CD4-positive, alpha-beta T cell (primary cell): ENCODE measurements at regions of chrX and their contacts with region 1.

Region 1: GRCh38 chrX:119880552-119881437 is 9.2 kb downstream of the NDUFA1 start:
- DNase-seq: peak in 8 of 14 experiments; percentile 4 to 76 (median 25)
- ATAC-seq: peak; percentile 90
- H3K4me3 ChIP-seq: no peak overlapping the region
- H3K4me3 Mint-ChIP-seq: no peak overlapping the region
- H3K27ac ChIP-seq: no peak overlapping the region
- H3K27ac Mint-ChIP-seq: peak overlapping the region; percentile 69
- H3K4me1 ChIP-seq: no peaks in the 10 kb centered on the region
- H3K4me1 Mint-ChIP-seq: peaks cover 20% of the 10 kb centered on the region
- H3K27me3 ChIP-seq: no peaks in the 10 kb centered on the region
- H3K27me3 Mint-ChIP-seq: no peaks in the 10 kb centered on the region
- CTCF ChIP-seq: peak; percentile 48

Region 2: DNA sequence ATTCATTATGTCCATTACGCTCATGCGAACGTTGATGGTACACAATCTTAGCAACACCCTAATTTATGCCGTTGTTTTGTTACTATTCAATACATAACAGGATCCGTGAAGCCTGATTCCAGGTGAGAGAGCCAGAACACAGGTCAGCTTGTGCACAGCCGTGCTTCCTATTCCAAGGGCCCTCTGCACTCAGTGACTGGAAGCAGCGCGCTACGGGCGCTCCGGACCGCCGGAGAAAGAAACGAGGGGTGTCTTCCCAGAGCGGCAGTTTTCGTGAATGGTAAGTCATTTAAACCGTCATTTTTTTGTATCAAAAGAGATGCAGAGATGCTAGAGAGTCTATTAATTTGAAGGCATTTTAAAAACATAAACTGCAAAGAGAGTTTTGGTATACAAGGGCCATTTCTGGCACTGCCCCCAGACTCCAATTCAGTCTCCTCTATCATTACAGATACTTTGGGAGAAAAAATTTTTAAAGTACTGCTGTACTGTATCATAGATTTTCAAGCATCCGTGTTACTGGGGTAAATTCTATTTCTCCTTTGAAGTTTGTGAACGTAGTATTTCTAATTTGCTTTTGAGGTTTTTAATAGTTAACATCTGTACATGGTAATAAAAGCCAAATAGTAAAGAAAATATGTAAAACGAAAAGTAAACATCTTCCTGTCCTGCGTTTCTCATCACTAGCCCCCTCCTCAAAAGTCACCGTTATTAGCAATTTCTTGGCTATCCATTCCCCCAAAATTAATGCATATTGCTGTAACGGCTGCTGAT is 406.0 kb before region 1 on chrX:
- CTCF ChIA-PET with region 1: no interaction called
- POLR2A ChIA-PET with region 1: no interaction called
- intact Hi-C with region 1: loop called in 1 of 2 experiments (anchors 5 kb)
- DNase-seq: no peak
- ATAC-seq: no peak
- H3K4me3 ChIP-seq: no peak overlapping the region
- H3K4me3 Mint-ChIP-seq: no peak overlapping the region
- H3K27ac ChIP-seq: no peak overlapping the region
- H3K27ac Mint-ChIP-seq: no peak overlapping the region
- H3K4me1 ChIP-seq: peaks cover 5% of the 10 kb centered on the region
- H3K4me1 Mint-ChIP-seq: peaks cover 2% of the 10 kb centered on the region
- H3K27me3 ChIP-seq: no peaks in the 10 kb centered on the region
- H3K27me3 Mint-ChIP-seq: no peaks in the 10 kb centered on the region
- CTCF ChIP-seq: no peak

Region 3: DNA sequence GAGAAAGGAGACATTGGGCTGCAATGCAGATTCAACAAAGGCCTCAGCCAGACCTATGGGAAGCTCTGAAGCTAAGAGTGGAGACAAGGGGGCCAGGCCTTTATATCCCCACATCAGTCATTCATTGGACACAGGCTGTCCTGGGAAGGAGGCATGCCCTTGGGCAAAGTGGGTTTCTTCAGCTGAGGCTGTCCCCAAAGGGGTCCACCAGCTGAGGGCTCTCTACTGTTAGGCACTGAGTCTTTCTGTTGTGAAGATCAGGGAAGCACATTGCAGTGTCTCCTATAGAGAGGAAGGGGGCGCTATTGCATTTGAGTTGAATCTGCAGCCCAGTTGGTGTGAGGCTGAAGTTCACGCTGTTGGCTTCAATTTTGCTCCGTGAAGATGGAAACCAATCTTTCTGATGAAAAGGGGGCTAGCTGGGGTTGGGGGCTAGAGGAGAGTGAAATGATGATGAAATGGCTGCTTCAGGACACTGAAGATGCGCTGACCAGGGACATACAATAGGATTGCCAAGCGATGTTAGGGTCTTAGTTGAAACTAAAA is 364.6 kb before region 1 on chrX:
- CTCF ChIA-PET with region 1: interaction called, 3 read pairs
- POLR2A ChIA-PET with region 1: no interaction called
- intact Hi-C with region 1: loop called (anchors 2 kb)
- DNase-seq: peak in 12 of 14 experiments; percentile 4 to 77 (median 18)
- ATAC-seq: peak; percentile 96
- H3K4me3 ChIP-seq: no peak overlapping the region
- H3K4me3 Mint-ChIP-seq: no peak overlapping the region
- H3K27ac ChIP-seq: no peak overlapping the region
- H3K27ac Mint-ChIP-seq: no peak overlapping the region
- H3K4me1 ChIP-seq: peaks cover 2% of the 10 kb centered on the region
- H3K4me1 Mint-ChIP-seq: peaks cover 5% of the 10 kb centered on the region
- H3K27me3 ChIP-seq: no peaks in the 10 kb centered on the region
- H3K27me3 Mint-ChIP-seq: no peaks in the 10 kb centered on the region
- CTCF ChIP-seq: peak; percentile 69

Region 4: DNA sequence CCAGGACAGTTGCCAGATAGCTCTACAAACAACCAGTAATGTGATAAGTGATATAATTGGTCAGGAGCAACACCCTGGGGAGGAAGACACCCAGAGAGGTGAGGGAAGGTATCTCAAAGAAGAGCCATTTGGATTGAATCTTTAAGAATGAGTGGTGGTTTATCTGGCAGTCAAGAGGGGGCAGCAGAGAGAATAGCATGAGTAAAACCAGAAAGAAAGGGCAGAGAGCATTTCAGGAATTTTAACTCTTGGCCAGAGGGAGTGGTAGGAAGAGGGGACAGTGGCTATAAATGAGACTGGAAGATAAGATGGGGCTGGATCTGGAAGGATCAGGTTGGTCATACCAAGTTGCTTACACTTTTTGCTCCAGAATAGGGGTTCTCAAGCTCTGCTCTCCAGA is 181.9 kb before region 1 on chrX:
- CTCF ChIA-PET with region 1: no interaction called
- POLR2A ChIA-PET with region 1: no interaction called
- intact Hi-C with region 1: no loop called
- DNase-seq: peak in 3 of 14 experiments; percentile 55 to 71 (median 68)
- ATAC-seq: peak; percentile 56
- H3K4me3 ChIP-seq: no peak overlapping the region
- H3K4me3 Mint-ChIP-seq: no peak overlapping the region
- H3K27ac ChIP-seq: no peak overlapping the region
- H3K27ac Mint-ChIP-seq: no peak overlapping the region
- H3K4me1 ChIP-seq: peaks cover 5% of the 10 kb centered on the region
- H3K4me1 Mint-ChIP-seq: peaks cover 6% of the 10 kb centered on the region
- H3K27me3 ChIP-seq: no peaks in the 10 kb centered on the region
- H3K27me3 Mint-ChIP-seq: no peaks in the 10 kb centered on the region
- CTCF ChIP-seq: peak; percentile 53

Region 5: GRCh38 chrX:119852382-119853353 is 28.1 kb before region 1 on chrX and contains the start of gene UPF3B:
- CTCF ChIA-PET with region 1: interaction called, 3 read pairs
- POLR2A ChIA-PET with region 1: interaction called, 13 read pairs
- intact Hi-C with region 1: no loop called
- DNase-seq: peak; percentile 82 to 98 (median 90)
- ATAC-seq: peak; percentile 98
- H3K4me3 ChIP-seq: peak within 1 kb of the TSS; percentile 95
- H3K4me3 Mint-ChIP-seq: peak within 1 kb of the TSS; percentile 99
- H3K27ac ChIP-seq: peak within 1 kb of the TSS; percentile 82 to 93
- H3K27ac Mint-ChIP-seq: peak within 1 kb of the TSS; percentile 94
- H3K4me1 ChIP-seq: peaks cover 10% of the 10 kb centered on the region
- H3K4me1 Mint-ChIP-seq: peaks cover 22% of the 10 kb centered on the region
- H3K27me3 ChIP-seq: no peaks in the 10 kb centered on the region
- H3K27me3 Mint-ChIP-seq: no peaks in the 10 kb centered on the region
- CTCF ChIP-seq: no peak
- total RNA-seq, gene UPF3B: 4.7 to 5.7 TPM

Region 6: GRCh38 chrX:119919833-119920585 is 39.2 kb after region 1 on chrX:
- CTCF ChIA-PET with region 1: no interaction called
- POLR2A ChIA-PET with region 1: no interaction called
- intact Hi-C with region 1: no loop called
- DNase-seq: no peak
- ATAC-seq: no peak
- H3K4me3 ChIP-seq: no peak overlapping the region
- H3K4me3 Mint-ChIP-seq: no peak overlapping the region
- H3K27ac ChIP-seq: no peak overlapping the region
- H3K27ac Mint-ChIP-seq: no peak overlapping the region
- H3K4me1 ChIP-seq: no peaks in the 10 kb centered on the region
- H3K4me1 Mint-ChIP-seq: no peaks in the 10 kb centered on the region
- H3K27me3 ChIP-seq: no peaks in the 10 kb centered on the region
- H3K27me3 Mint-ChIP-seq: no peaks in the 10 kb centered on the region
- CTCF ChIP-seq: no peak